Activated CD8-positive, alpha-beta memory T cell treated with anti-CD3 and anti-CD28 coated beads, Interleukin-2, amount 10 ng/mL, durations not matched to agents 7 days and 5 days (primary cell): ENCODE measurements at regions of chrX and their contacts with region 1.

Region 1: GRCh38 chrX:110146521-110146920 is 143.6 kb downstream of the TMEM164 start:
- DNase-seq: peak; percentile 44
- ATAC-seq: peak; percentile 78
- H3K4me3 Mint-ChIP-seq: no peak overlapping the region
- H3K27ac Mint-ChIP-seq: no peak overlapping the region
- H3K4me1 Mint-ChIP-seq: peaks cover 7% of the 10 kb centered on the region
- H3K27me3 Mint-ChIP-seq: no peaks in the 10 kb centered on the region

Region 2: GRCh38 chrX:109890895-109891502 is 255.5 kb before region 1 on chrX:
- CTCF ChIA-PET with region 1: interaction called, 11 read pairs
- DNase-seq: peak; percentile 62
- ATAC-seq: peak; percentile 57
- H3K4me3 Mint-ChIP-seq: no peak overlapping the region
- H3K27ac Mint-ChIP-seq: no peak overlapping the region
- H3K4me1 Mint-ChIP-seq: peaks cover 1% of the 10 kb centered on the region
- H3K27me3 Mint-ChIP-seq: peaks cover 12% of the 10 kb centered on the region

Region 3: DNA sequence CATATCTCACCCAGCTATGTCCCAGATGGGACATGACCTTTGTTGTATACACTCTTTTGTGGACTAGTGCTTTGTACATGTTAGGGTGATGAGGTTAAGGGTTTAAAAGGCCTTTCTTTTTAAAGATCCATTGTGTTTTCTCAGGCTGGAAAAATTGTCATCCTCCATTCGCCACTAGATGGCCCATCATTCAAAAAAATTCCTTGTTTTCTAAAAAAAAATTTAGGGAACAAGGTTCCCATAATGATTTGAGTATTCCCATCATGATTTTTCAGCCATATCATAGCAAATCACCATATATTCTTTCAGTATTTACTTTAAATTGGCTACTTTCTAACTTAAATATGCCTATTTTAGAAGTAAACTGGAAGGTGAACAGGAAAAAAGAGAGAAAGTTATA is 235.5 kb before region 1 on chrX:
- CTCF ChIA-PET with region 1: interaction called, 10 read pairs
- DNase-seq: no peak
- ATAC-seq: no peak
- H3K4me3 Mint-ChIP-seq: no peak overlapping the region
- H3K27ac Mint-ChIP-seq: no peak overlapping the region
- H3K4me1 Mint-ChIP-seq: no peaks in the 10 kb centered on the region
- H3K27me3 Mint-ChIP-seq: peaks cover 2% of the 10 kb centered on the region

Region 4: GRCh38 chrX:110097920-110098319 is 48.6 kb before region 1 on chrX:
- CTCF ChIA-PET with region 1: no interaction called
- DNase-seq: no peak
- ATAC-seq: no peak
- H3K4me3 Mint-ChIP-seq: no peak overlapping the region
- H3K27ac Mint-ChIP-seq: no peak overlapping the region
- H3K4me1 Mint-ChIP-seq: no peaks in the 10 kb centered on the region
- H3K27me3 Mint-ChIP-seq: no peaks in the 10 kb centered on the region

Region 5: GRCh38 chrX:110133735-110134370 is 12.7 kb before region 1 on chrX:
- CTCF ChIA-PET with region 1: interaction called, 11 read pairs
- DNase-seq: no peak
- ATAC-seq: no peak
- H3K4me3 Mint-ChIP-seq: no peak overlapping the region
- H3K27ac Mint-ChIP-seq: peak overlapping the region; percentile 36
- H3K4me1 Mint-ChIP-seq: peaks cover 18% of the 10 kb centered on the region
- H3K27me3 Mint-ChIP-seq: no peaks in the 10 kb centered on the region

Region 6: GRCh38 chrX:110172215-110172614 is 25.7 kb after region 1 on chrX:
- CTCF ChIA-PET with region 1: no interaction called
- DNase-seq: no peak
- ATAC-seq: no peak
- H3K4me3 Mint-ChIP-seq: no peak overlapping the region
- H3K27ac Mint-ChIP-seq: peak overlapping the region; percentile 31
- H3K4me1 Mint-ChIP-seq: no peaks in the 10 kb centered on the region
- H3K27me3 Mint-ChIP-seq: no peaks in the 10 kb centered on the region

Region 7: DNA sequence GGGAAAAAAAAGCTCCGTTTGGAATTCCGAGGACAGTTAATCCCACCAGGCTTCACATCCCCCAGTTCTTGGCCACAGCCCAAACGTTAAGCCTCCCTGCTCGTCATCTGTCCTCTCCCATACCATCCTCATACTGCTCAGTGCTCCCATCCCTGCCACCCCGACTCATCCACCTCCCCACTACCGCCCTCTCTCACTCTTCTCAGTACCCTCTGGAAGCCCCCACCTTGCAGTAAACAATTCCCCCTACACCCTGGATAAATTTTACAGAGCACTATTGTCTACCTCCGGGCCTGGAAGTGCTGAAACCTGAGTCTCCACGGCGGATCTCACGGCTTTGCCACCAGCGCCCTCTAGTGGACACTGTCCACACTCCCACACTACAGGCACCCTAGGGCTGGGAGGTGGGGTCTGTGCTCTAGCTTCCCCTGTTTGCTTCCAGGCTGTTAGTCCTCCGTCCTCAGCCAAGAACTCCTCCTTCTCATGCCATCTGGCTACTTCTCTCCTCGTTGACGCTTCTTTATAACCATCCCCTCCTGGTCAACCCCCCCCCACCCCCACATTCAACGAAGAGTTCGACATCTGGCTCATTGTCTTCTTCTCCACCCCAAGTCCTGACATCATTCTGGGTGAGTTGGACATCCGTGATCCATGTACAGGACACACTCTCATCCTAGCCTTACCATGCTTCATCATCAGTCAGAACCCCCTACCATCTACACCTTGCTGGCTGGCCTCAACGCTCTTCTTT is 266.6 kb after region 1 on chrX:
- CTCF ChIA-PET with region 1: interaction called, 21 read pairs
- DNase-seq: peak; percentile 67
- ATAC-seq: peak; percentile 87
- H3K4me3 Mint-ChIP-seq: no peak overlapping the region
- H3K27ac Mint-ChIP-seq: no peak overlapping the region
- H3K4me1 Mint-ChIP-seq: peaks cover 14% of the 10 kb centered on the region
- H3K27me3 Mint-ChIP-seq: peaks cover 4% of the 10 kb centered on the region